HEK293T (cell line): ENCODE measurements at regions of chr11 and their contacts with region 1.

Region 1: GRCh38 chr11:72793425-72794367 is at the start of gene STARD10:
- DNase-seq: peak; percentile 98

Region 2: DNA sequence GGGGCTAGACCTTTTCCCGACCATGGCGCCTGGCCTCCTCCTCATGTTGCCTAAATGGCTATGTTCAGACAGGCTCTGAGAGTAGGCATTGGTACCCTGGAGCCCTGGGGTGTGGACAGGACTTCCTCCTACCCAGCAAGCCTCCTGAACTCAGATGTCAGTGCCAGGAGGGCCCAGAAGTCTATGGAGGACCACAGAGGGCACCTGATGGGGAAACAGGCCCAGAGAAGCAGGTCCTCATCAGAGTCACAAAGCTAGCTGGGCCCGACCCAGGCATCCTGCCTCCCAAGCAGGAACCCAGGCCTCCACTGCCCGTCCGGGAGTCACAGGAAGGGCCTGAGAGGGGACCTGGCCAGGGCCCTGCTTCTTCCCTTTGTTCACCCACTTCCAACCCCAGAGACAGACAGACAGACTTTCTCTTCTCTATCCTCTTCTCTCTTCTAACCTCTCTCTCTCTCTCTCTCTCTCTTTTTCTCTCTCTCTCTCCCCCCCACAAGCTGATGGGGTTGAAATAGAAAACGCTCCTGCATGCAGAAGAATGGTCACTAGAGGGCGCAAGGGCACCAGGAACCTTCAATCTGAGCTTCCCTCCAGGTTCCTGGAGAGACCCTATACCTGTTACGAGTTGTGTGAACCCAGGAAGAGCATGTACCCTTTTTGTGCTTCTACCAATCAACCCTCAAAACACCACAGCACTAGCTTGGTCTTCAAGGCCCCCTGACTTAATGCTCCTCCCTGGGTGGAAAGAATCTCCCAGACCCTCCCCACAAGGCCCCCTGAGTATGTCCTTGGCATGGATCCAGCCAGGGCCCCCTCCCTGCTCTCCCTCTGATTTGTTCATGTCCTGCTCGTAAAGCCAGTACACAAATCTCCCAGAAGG is 68.6 kb before region 1 on chr11:
- CTCF ChIA-PET with region 1: interaction called, 7 read pairs
- POLR2A ChIA-PET with region 1: interaction called, 26 read pairs
- DNase-seq: peak; percentile 78

Region 3: DNA sequence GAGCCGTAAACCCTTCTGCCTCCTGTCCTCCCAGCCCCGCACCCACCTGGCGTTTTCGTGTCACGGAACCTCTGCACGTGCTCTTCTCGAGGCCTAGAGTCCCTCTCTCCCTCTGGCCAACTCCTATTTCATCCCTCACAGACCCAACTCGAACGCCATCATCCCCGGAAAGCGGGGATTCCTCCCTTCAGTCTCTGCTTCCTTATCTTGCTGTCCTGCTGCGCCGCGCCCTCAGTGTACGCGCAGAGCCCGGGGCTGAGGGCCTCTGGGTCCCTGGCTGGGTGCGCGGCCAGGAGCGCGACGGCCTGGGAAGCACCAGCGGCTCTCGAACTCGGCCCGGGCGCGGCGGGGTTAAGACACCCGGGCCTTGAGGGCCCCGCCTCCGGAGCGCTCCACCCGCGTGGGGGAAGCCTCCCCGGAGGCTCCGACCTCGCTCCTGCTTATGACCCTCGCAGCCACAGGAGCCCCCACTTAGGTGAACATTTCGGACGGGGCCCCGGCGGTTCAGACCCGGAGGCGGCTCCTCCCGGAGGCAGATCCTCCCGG is 20.1 kb after region 1 on chr11:
- CTCF ChIA-PET with region 1: interaction called, 11 read pairs
- POLR2A ChIA-PET with region 1: interaction called, 17 read pairs
- DNase-seq: peak; percentile 71